Caco-2 (cell line): ENCODE measurements at regions of chr1 and their contacts with region 1.

Region 1: GRCh38 chr1:21368515-21369289 is 71.2 kb upstream of the NBPF3 start:
- DNase-seq: peak; percentile 77 to 84
- H3K4me3 ChIP-seq: no peak overlapping the region
- H3K4me3 Mint-ChIP-seq: peak overlapping the region; percentile 15
- H3K27ac Mint-ChIP-seq: peak overlapping the region; percentile 29
- H3K4me1 ChIP-seq: peaks cover 5% of the 10 kb centered on the region; the same call in 1 of the 2 replicates
- H3K4me1 Mint-ChIP-seq: no peaks in the 10 kb centered on the region
- H3K27me3 ChIP-seq: no peaks in the 10 kb centered on the region
- H3K27me3 Mint-ChIP-seq: no peaks in the 10 kb centered on the region
- CTCF ChIP-seq: peak; percentile 95 to 98

Region 2: DNA sequence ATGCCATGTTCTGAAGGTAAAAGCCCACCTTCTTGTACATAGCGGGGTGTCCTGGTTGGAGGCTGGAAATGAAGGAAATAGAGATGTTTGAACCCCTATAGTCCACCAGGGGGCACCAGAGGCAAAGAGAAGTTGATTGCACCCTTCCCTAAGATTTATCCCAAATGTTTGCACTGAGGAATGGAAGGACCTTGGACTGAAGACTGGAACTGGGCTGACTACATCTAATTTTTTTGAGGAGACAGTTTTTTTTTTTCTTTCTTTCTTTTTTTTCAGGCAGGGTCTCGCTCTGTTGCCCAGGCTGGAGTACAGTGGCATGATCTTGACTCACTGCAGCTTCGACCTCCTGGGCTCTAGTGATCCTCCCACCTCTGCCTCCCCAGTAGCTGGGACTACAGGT is 136.7 kb before region 1 on chr1:
- CTCF ChIA-PET with region 1: interaction called, 31 read pairs
- POLR2A ChIA-PET with region 1: no interaction called
- intact Hi-C with region 1: loop called (anchors 1 kb)
- DNase-seq: peak; percentile 46 to 68
- H3K4me3 ChIP-seq: no peak overlapping the region
- H3K4me3 Mint-ChIP-seq: no peak overlapping the region
- H3K27ac Mint-ChIP-seq: no peak overlapping the region
- H3K4me1 ChIP-seq: peaks cover 5% of the 10 kb centered on the region
- H3K4me1 Mint-ChIP-seq: no peaks in the 10 kb centered on the region
- H3K27me3 ChIP-seq: no peaks in the 10 kb centered on the region
- H3K27me3 Mint-ChIP-seq: no peaks in the 10 kb centered on the region
- CTCF ChIP-seq: peak; percentile 73 to 84

Region 3: GRCh38 chr1:21270086-21270689 is 98.5 kb before region 1 on chr1:
- CTCF ChIA-PET with region 1: interaction called, 14 read pairs
- POLR2A ChIA-PET with region 1: no interaction called
- intact Hi-C with region 1: no loop called
- DNase-seq: peak; percentile 75 to 79
- H3K4me3 ChIP-seq: no peak overlapping the region
- H3K4me3 Mint-ChIP-seq: no peak overlapping the region
- H3K27ac Mint-ChIP-seq: no peak overlapping the region
- H3K4me1 ChIP-seq: peaks cover 31% of the 10 kb centered on the region
- H3K4me1 Mint-ChIP-seq: no peaks in the 10 kb centered on the region
- H3K27me3 ChIP-seq: no peaks in the 10 kb centered on the region
- H3K27me3 Mint-ChIP-seq: no peaks in the 10 kb centered on the region
- CTCF ChIP-seq: peak; percentile 66 to 71

Region 4: GRCh38 chr1:21534674-21535378 is 166.1 kb after region 1 on chr1:
- CTCF ChIA-PET with region 1: interaction called, 5 read pairs
- POLR2A ChIA-PET with region 1: no interaction called
- intact Hi-C with region 1: loop called (anchors 1 kb)
- DNase-seq: peak; percentile 54 to 64
- H3K4me3 ChIP-seq: no peak overlapping the region
- H3K4me3 Mint-ChIP-seq: no peak overlapping the region
- H3K27ac Mint-ChIP-seq: no peak overlapping the region
- H3K4me1 ChIP-seq: peaks cover 6% of the 10 kb centered on the region; the same call in 1 of the 2 replicates
- H3K4me1 Mint-ChIP-seq: peaks cover 5% of the 10 kb centered on the region
- H3K27me3 ChIP-seq: no peaks in the 10 kb centered on the region
- H3K27me3 Mint-ChIP-seq: peaks cover 3% of the 10 kb centered on the region
- CTCF ChIP-seq: peak; percentile 37 to 61

Region 5: DNA sequence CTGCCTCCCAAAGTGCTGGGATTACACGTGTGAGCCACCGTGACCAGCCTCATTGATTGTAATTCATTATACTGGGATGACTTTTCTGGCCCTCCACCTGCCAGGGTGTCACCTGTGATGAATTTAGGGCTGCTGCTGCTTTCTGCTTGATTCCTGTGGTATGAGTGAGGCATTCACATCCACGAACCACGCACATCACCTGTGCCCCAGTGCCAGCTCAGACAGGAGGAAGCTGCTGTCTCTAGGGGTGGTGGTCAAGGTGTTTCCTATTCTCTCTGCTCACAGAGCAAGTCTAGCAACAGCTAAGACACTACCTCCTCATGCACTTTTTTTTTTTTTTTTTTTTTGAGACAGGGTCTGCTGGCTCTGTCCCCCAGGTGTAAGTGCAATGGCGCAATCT is 431.0 kb after region 1 on chr1:
- CTCF ChIA-PET with region 1: no interaction called
- POLR2A ChIA-PET with region 1: no interaction called
- intact Hi-C with region 1: no loop called
- DNase-seq: no peak
- H3K4me3 ChIP-seq: no peak overlapping the region
- H3K4me3 Mint-ChIP-seq: no peak overlapping the region
- H3K27ac Mint-ChIP-seq: no peak overlapping the region
- H3K4me1 ChIP-seq: no peaks in the 10 kb centered on the region
- H3K4me1 Mint-ChIP-seq: no peaks in the 10 kb centered on the region
- H3K27me3 ChIP-seq: no peaks in the 10 kb centered on the region
- H3K27me3 Mint-ChIP-seq: no peaks in the 10 kb centered on the region
- CTCF ChIP-seq: no peak

Region 6: GRCh38 chr1:21852282-21853128 is 483.8 kb after region 1 on chr1:
- CTCF ChIA-PET with region 1: no interaction called
- POLR2A ChIA-PET with region 1: no interaction called
- intact Hi-C with region 1: no loop called
- DNase-seq: no peak
- H3K4me3 ChIP-seq: no peak overlapping the region
- H3K4me3 Mint-ChIP-seq: no peak overlapping the region
- H3K27ac Mint-ChIP-seq: no peak overlapping the region
- H3K4me1 ChIP-seq: no peaks in the 10 kb centered on the region
- H3K4me1 Mint-ChIP-seq: no peaks in the 10 kb centered on the region
- H3K27me3 ChIP-seq: no peaks in the 10 kb centered on the region
- H3K27me3 Mint-ChIP-seq: no peaks in the 10 kb centered on the region
- CTCF ChIP-seq: no peak